Activated CD8-positive, alpha-beta T cell treated with anti-CD3 and anti-CD28 coated beads for 36 hours (primary cell): ENCODE measurements at regions of chr11 and their contacts with region 1.

Region 1: GRCh38 chr11:69700278-69701140 is 3.3 kb downstream of the FGF19 start:
- DNase-seq: no peak
- ATAC-seq: no peak
- H3K4me3 Mint-ChIP-seq: no peak overlapping the region
- H3K27ac Mint-ChIP-seq: no peak overlapping the region
- H3K4me1 Mint-ChIP-seq: peaks cover 4% of the 10 kb centered on the region
- H3K27me3 Mint-ChIP-seq: peaks cover 52% of the 10 kb centered on the region
- CTCF ChIP-seq: no peak

Region 2: DNA sequence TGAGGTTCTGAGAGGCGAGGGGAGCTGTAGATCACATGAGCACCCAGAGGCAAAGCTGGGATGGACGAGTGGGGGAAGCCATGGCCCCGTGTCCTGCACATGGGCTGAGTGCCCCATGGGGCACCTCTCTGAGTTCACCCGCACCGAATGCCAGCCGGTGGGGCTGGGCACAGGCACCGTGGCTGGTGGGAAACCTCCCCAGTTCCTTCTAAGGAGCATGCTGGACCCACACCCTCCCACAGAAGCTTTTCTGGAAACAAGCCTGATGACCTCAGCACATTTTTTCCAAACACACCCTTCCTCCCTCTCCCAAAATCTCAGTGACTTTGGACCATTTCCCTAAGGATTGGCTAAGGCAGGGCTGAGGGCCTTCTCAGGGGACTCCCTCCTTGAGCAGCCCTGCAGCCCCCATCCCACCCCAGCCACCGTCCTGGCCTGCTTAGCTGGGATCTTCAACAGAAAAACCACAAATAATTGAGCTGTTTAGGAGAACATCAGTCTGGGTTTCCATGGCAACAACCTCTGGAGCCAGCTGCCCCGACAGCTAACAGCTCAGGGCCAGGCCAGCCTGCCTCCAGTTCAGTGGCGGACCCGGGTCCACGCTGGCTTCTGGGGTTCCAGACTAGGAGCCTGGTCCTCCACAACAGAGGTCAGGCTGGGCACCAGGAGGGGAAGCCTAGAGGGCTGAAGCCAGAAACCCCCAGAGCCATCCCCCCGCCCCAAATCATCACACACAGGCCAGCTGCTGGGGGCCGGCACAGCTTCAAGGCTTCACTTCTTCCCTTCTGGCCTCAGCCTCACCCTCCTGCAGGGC is 237.1 kb before region 1 on chr11:
- CTCF ChIA-PET with region 1: no interaction called
- POLR2A ChIA-PET with region 1: no interaction called
- intact Hi-C with region 1: no loop called
- DNase-seq: no peak
- ATAC-seq: no peak
- H3K4me3 Mint-ChIP-seq: no peak overlapping the region
- H3K27ac Mint-ChIP-seq: no peak overlapping the region
- H3K4me1 Mint-ChIP-seq: no peaks in the 10 kb centered on the region
- H3K27me3 Mint-ChIP-seq: peaks cover 5% of the 10 kb centered on the region
- CTCF ChIP-seq: no peak

Region 3: GRCh38 chr11:69817265-69818230 is 117.0 kb after region 1 on chr11:
- CTCF ChIA-PET with region 1: no interaction called
- POLR2A ChIA-PET with region 1: no interaction called
- intact Hi-C with region 1: loop called (anchors 10 kb)
- DNase-seq: no peak
- ATAC-seq: no peak
- H3K4me3 Mint-ChIP-seq: no peak overlapping the region
- H3K27ac Mint-ChIP-seq: no peak overlapping the region
- H3K4me1 Mint-ChIP-seq: no peaks in the 10 kb centered on the region
- H3K27me3 Mint-ChIP-seq: peaks cover 30% of the 10 kb centered on the region
- CTCF ChIP-seq: no peak

Region 4: DNA sequence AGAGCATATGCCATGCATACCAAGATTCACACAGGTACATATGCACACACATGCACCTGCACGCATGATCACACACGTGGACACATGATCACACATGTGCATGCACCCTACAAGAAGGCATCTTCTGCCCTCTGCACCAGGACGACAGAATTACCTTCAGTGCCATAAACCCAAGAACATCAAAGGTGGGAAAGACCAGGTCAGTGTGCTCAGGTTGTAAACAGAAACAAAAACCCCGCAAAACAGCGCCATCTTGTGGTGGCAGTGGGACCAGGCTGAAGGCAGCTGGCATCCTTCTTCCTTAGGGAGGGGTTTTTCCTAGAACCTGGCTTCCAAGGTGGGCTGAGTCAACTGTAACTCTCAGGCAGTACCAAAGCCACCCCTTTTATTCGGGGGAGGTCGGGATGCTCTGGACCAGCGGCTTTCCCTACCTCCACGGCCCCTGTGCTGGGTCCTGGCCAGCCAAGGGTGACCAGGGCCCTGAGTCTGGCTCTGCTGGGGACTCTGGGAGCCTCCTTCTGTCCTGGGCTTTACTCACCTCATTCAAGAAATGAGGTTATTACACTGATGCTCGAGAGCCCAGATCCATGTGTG is 188.1 kb after region 1 on chr11:
- CTCF ChIA-PET with region 1: no interaction called
- POLR2A ChIA-PET with region 1: no interaction called
- intact Hi-C with region 1: loop called (anchors 10 kb)
- DNase-seq: peak; percentile 77
- ATAC-seq: peak; percentile 55
- H3K4me3 Mint-ChIP-seq: no peak overlapping the region
- H3K27ac Mint-ChIP-seq: no peak overlapping the region
- H3K4me1 Mint-ChIP-seq: peaks cover 3% of the 10 kb centered on the region
- H3K27me3 Mint-ChIP-seq: peaks cover 19% of the 10 kb centered on the region
- CTCF ChIP-seq: peak; percentile 91